ENCODE measurements at regions of chr15 and their contacts with region 1.

Region 1: GRCh38 chr15:72141171-72142084 is 23.2 kb downstream of the SENP8 start:
- DNase-seq: no peak
- H3K4me3 ChIP-seq: no peak overlapping the region
- H3K27ac ChIP-seq: no peak overlapping the region
- H3K4me1 ChIP-seq: no peaks in the 10 kb centered on the region
- H3K27me3 ChIP-seq: no peaks in the 10 kb centered on the region
- CTCF ChIP-seq: no peak

Region 2: DNA sequence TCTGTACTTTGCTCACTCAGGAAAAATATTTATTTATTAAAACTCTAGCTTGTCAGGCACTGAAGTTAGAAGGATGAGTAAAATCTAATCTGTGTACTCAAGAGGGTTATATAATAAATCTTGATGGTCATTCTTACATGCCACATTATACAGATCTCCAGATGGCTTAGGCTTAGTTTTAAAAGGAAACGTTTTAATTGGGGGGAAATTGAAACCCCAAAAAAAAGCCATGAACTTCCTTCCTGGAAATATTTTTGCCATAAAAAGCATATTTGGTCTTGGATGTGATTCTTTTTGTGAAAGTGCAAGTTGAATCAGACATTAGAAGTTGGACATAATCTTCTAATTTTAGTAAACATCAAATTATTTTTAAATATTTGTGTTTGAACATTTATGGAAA is 17.2 kb before region 1 on chr15:
- CTCF ChIA-PET with region 1: no interaction called
- POLR2A ChIA-PET with region 1: interaction called, 16 read pairs
- intact Hi-C with region 1: no loop called
- DNase-seq: no peak
- H3K4me3 ChIP-seq: no peak overlapping the region
- H3K27ac ChIP-seq: no peak overlapping the region
- H3K4me1 ChIP-seq: 0 out of 2 replicates have a peak, but pooled peaks cover under 1% of the 10 kb centered on the region
- H3K27me3 ChIP-seq: no peaks in the 10 kb centered on the region
- CTCF ChIP-seq: no peak

Region 3: DNA sequence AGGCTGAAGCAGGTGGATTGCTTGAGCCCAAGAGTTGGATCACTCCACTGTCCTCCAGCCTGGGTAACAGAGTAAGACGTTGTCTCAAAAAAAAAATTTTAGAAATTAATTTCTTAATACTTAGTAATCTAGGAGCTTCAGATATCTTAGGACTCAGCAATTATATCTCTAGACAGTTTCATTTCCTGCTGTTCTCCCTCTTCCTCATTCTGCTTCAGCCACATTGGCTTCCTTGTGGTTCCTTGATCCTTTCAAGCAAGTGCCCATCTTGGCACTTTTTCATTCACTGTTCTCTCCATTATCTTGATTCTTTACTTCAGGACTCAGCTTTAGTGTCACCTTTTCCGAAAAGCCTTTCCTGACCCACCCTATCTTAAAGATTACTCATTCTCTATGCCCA is 279.1 kb after region 1 on chr15:
- CTCF ChIA-PET with region 1: interaction called, 13 read pairs
- POLR2A ChIA-PET with region 1: no interaction called
- intact Hi-C with region 1: no loop called
- DNase-seq: no peak
- H3K4me3 ChIP-seq: no peak overlapping the region
- H3K27ac ChIP-seq: no peak overlapping the region
- H3K4me1 ChIP-seq: no peaks in the 10 kb centered on the region
- H3K27me3 ChIP-seq: peaks cover 16% of the 10 kb centered on the region
- CTCF ChIP-seq: no peak